Stomach (tissue), 19 donors: ENCODE measurements at regions of chr3 and their contacts with region 1.

Region 1: GRCh38 chr3:134308350-134308891 is 57.8 kb upstream of the RYK start:
- DNase-seq: peak; percentile 89 to 94
- H3K4me3 ChIP-seq: peak overlapping the region in 1 of 4 donors; percentile 10
- H3K27ac ChIP-seq: peak overlapping the region in 4 of 5 donors; percentile 63 to 93 (median 92)
- H3K4me1 ChIP-seq: peaks cover 27 to 53% (median 42%) of the 10 kb centered on the region in 4 donors
- H3K27me3 ChIP-seq: peaks cover 0 to 10% (median 1%) of the 10 kb centered on the region in 3 donors
- CTCF ChIP-seq: peak in 6 of 7 experiments; percentile 94 to 100 (median 98)
- EP300 ChIP-seq: no peak
- POLR2A ChIP-seq: no peak

Region 2: DNA sequence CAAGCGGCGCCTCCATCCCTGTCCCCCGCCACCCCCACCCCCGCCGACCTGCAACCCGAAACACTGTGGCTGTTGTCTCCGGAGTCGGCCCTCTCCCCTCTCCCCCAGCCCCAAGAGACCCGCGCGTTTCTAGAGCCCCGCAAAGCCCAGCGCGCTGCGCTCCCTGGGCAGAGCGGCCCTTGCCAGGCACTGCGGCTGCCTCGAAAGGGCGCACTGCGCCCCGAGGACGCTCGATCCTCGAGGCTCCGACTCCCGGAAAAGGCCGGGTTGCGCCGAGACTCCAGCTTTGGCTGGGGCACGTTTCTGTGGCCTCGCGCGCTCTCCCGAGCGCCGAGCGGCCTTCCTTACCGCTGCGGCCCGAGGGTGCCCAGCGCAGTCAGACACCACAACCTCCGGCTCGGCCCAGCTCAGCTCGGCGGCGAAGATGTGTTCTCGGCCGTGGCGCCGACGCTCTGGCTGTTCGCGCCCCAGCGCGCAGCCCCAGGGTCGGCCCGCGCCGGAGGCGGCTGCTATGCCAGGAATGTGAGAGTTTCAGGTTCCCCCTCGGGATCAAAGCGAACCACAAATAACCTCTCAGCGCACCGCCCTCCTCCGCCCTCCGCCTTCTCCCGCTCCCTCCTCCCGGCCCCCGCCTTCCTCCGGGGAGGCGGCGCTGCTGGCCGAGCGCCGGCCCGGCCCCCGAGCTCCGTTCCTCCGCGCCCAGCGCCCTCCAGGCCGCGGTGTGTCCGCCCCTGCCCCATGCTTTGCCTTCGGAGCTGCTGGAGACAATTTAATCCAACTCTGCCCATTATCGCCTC is 65.8 kb after region 1 on chr3 and contains the start of gene AMOTL2:
- intact Hi-C with region 1: loop called (anchors 5 kb)
- DNase-seq: peak; percentile 89 to 97
- H3K4me3 ChIP-seq: peak within 1 kb of the TSS; percentile 57 to 85 (median 61)
- H3K27ac ChIP-seq: peak within 1 kb of the TSS; percentile 93 to 100 (median 98)
- H3K4me1 ChIP-seq: peaks cover 49 to 68% (median 61%) of the 10 kb centered on the region in 4 donors
- H3K27me3 ChIP-seq: peaks cover 0 to 27% (median 0%) of the 10 kb centered on the region in 3 donors
- CTCF ChIP-seq: no peak
- EP300 ChIP-seq: no peak
- POLR2A ChIP-seq: peak in 2 of 4 donors; percentile 69 to 83
- total RNA-seq, gene AMOTL2: 29.3 to 782 (median 54.9) TPM